Activated naive CD4-positive, alpha-beta T cell treated with anti-CD3 and anti-CD28 coated beads for 36 hours (primary cell): ENCODE measurements at regions of chr16 and their contacts with region 1.

Region 1: GRCh38 chr16:31073968-31074813 is at the starts of genes ZNF646 and ZNF668:
- DNase-seq: peak; percentile 99
- H3K4me3 Mint-ChIP-seq: peak within 1 kb of the TSS; percentile 94
- H3K27ac Mint-ChIP-seq: peak within 1 kb of the TSS; percentile 93
- H3K4me1 Mint-ChIP-seq: peaks cover 31% of the 10 kb centered on the region
- H3K27me3 Mint-ChIP-seq: no peaks in the 10 kb centered on the region
- total RNA-seq, gene ZNF646: 16.7 to 17.4 TPM
- total RNA-seq, gene ZNF668: 9.5 to 10.1 TPM

Region 2: DNA sequence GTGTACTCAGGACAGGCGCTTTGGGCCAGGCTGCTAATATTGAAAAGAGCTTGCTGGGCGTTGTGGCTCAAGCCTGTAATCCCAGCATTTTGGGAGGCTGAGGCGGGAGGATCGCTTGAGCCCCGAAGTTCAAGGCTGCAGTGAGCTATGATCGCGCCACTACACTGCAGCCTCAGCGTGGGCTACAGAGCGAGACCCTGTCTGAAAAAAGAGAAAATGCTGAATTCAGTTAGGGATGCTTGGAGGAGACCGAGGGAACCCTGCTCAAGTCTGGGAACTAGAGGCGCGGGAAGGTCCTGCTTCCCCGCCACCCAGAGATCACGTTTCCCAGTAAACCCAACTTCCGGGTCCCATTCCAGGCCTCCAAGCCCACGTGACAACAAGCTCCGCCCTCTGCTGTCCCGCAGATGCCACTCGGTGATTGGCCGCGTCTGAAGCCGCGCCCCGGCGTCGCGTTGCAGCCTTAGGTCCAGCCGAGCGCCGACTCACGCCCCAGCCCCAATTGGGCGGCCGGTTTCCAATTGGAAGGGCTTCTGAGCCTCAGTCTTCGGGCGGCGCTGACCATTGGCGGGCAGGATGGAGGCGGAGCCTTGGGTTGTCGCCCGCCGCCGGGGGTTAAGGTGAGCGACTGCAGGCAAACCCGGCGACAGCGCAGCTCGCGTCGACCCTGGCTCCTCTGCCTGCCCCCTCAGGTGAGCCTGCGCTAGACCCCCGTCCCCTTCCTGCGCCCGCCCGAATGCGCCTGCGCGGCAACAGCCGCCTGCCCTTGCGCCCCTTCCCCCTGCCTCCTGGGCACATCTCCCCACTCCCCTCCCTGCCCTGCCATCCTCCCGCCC is 326.2 kb before region 1 on chr16 and contains the start of gene PHKG2:
- CTCF ChIA-PET with region 1: no interaction called
- intact Hi-C with region 1: loop called (anchors 2 kb)
- DNase-seq: peak; percentile 99
- H3K4me3 Mint-ChIP-seq: peak within 1 kb of the TSS; percentile 89
- H3K27ac Mint-ChIP-seq: peak within 1 kb of the TSS; percentile 86
- H3K4me1 Mint-ChIP-seq: peaks cover 19% of the 10 kb centered on the region
- H3K27me3 Mint-ChIP-seq: no peaks in the 10 kb centered on the region
- total RNA-seq, gene PHKG2: 23.3 to 26.4 TPM

Region 3: DNA sequence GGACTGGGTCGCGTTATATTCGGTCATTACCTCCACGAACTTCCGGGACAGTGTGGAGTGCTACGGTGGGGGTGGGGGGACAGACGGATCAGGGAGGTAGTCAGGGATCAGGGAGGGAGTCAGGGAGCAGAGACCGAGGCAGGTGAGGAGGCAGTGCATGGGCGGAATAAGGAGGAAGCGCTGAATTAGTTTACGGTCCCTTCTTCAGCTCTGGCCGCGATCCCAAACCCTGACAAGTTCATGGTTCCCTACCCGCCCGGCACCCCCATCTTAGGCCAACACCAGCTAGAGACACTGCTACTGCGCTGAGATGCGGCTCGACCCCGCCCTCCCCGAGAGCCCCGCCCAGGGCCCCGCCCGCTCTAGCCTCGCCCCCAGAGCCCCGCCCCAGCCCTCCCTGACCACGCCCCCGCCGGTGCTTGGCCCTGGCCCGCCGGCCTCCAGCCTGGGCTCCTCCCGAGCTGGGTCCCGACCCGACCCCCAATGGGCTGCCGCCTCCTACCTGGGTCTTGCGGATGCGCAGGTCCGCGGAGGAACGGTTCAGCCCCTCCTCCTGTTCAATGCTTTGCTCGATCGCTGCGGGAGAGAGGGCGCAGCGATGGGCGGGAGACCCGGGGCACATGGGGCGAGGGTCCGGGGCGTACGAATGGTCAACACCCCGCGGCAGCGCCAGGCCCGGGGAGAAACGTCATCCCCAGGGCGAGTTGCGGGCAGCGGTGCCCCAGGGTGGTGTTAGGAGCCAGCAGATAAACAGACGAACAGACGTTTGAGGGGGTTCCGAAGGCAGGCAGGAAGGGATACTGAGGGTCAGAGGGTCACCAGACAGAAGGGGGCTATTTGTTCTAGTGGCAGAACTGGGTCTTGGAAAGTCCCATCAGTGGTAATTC is 76.9 kb before region 1 on chr16:
- CTCF ChIA-PET with region 1: interaction called, 4 read pairs
- intact Hi-C with region 1: loop called (anchors 1 kb)
- DNase-seq: peak; percentile 86
- H3K4me3 Mint-ChIP-seq: peak overlapping the region; percentile 73
- H3K27ac Mint-ChIP-seq: no peak overlapping the region
- H3K4me1 Mint-ChIP-seq: peaks cover 11% of the 10 kb centered on the region
- H3K27me3 Mint-ChIP-seq: no peaks in the 10 kb centered on the region

Region 4: GRCh38 chr16:31094424-31095120 is 20.4 kb after region 1 on chr16 and contains the start of gene VKORC1:
- CTCF ChIA-PET with region 1: interaction called, 3 read pairs
- intact Hi-C with region 1: loop called (anchors 1 kb)
- DNase-seq: peak; percentile 95
- H3K4me3 Mint-ChIP-seq: peak within 1 kb of the TSS; percentile 89
- H3K27ac Mint-ChIP-seq: peak within 1 kb of the TSS; percentile 83
- H3K4me1 Mint-ChIP-seq: peaks cover 31% of the 10 kb centered on the region
- H3K27me3 Mint-ChIP-seq: no peaks in the 10 kb centered on the region
- total RNA-seq, gene VKORC1: 43.4 to 47.8 TPM

Region 5: DNA sequence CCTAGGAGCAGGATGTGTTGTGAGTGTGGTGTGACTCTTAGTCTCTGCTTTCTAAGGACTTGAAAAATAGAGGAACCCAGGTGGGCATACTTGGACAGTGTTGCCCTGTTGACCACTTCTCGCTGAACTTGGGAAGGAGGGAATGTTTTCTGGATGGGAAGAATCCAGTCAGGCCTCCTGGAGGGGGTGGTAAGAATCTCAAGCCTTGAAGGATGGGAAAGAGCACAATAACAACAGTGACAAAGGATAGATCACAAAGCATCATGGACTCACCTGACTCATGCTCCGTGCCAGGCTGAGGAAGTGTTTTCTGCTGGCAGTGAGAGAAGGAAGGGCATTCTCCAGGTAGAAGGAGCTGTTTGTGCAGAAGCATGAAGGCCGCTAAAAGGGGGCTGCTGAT is 51.7 kb after region 1 on chr16:
- CTCF ChIA-PET with region 1: no interaction called
- intact Hi-C with region 1: no loop called
- DNase-seq: no peak
- H3K4me3 Mint-ChIP-seq: no peak overlapping the region
- H3K27ac Mint-ChIP-seq: no peak overlapping the region
- H3K4me1 Mint-ChIP-seq: peaks cover 3% of the 10 kb centered on the region
- H3K27me3 Mint-ChIP-seq: no peaks in the 10 kb centered on the region

Region 6: GRCh38 chr16:31142109-31143010 is 68.2 kb after region 1 on chr16:
- CTCF ChIA-PET with region 1: interaction called, 6 read pairs
- intact Hi-C with region 1: loop called (anchors 1 kb)
- DNase-seq: peak; percentile 99
- H3K4me3 Mint-ChIP-seq: peak overlapping the region; percentile 64
- H3K27ac Mint-ChIP-seq: peak overlapping the region; percentile 84
- H3K4me1 Mint-ChIP-seq: peaks cover 12% of the 10 kb centered on the region
- H3K27me3 Mint-ChIP-seq: no peaks in the 10 kb centered on the region

Region 7: GRCh38 chr16:31700526-31701388 is 626.6 kb after region 1 on chr16:
- CTCF ChIA-PET with region 1: no interaction called
- intact Hi-C with region 1: loop called (anchors 10 kb)
- DNase-seq: peak; percentile 93
- H3K4me3 Mint-ChIP-seq: peak overlapping the region; percentile 85
- H3K27ac Mint-ChIP-seq: peak overlapping the region; percentile 95
- H3K4me1 Mint-ChIP-seq: peaks cover 27% of the 10 kb centered on the region
- H3K27me3 Mint-ChIP-seq: no peaks in the 10 kb centered on the region